ENCODE measurements at regions of chr5 and their contacts with region 1.

Region 1: GRCh38 chr5:133962131-133962530 is 6.3 kb downstream of the C5orf15 start:
- DNase-seq: no peak
- ATAC-seq: no peak
- H3K4me3 ChIP-seq: no peak overlapping the region
- H3K4me3 Mint-ChIP-seq: no peak overlapping the region
- H3K27ac ChIP-seq: no peak overlapping the region
- H3K27ac Mint-ChIP-seq: no peak overlapping the region
- H3K4me1 ChIP-seq: peaks cover 0 to 1% of the 10 kb centered on the region in 2 experiments
- H3K4me1 Mint-ChIP-seq: peaks cover 36 to 64% (median 59%) of the 10 kb centered on the region in 3 donors
- H3K27me3 ChIP-seq: no peaks in the 10 kb centered on the region
- H3K27me3 Mint-ChIP-seq: no peaks in the 10 kb centered on the region

Region 2: DNA sequence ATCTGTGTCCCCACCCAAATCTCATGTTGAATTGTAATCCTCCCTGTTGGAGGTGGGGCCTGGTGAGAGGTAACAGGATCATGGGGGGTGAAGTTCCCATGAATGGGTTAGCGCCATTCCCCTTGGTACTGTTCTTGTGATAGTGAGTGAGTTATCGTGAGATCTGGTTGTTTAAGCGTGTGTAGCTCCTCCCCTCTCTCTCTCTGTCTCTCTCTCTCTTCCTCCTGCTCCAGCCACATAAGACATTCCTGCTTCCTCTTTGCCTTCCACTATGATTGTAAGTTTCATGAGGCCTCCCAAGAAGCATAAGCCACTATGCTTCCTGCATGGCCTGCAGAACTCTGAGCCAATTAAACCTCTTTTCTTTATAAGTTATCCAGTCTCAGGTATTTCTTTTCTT is 22.5 kb before region 1 on chr5:
- CTCF ChIA-PET with region 1: interaction called in 1 of 2 experiments, 10 read pairs
- POLR2A ChIA-PET with region 1: no interaction called
- DNase-seq: no peak
- ATAC-seq: no peak
- H3K4me3 ChIP-seq: no peak overlapping the region
- H3K4me3 Mint-ChIP-seq: no peak overlapping the region
- H3K27ac ChIP-seq: no peak overlapping the region
- H3K27ac Mint-ChIP-seq: no peak overlapping the region
- H3K4me1 ChIP-seq: no peaks in the 10 kb centered on the region
- H3K4me1 Mint-ChIP-seq: peaks cover 0 to 5% (median 0%) of the 10 kb centered on the region in 3 donors
- H3K27me3 ChIP-seq: peaks cover 0 to 31% of the 10 kb centered on the region in 2 experiments
- H3K27me3 Mint-ChIP-seq: peaks cover 3 to 9% of the 10 kb centered on the region in 2 donors

Measured in T-cell (primary cell).